ENCODE measurements at regions of chr3 and their contacts with region 1.

Region 1: GRCh38 chr3:89923921-89924610 is 816.6 kb downstream of the EPHA3 start:
- DNase-seq: no peak
- ATAC-seq: no peak
- H3K4me3 ChIP-seq: no peak overlapping the region
- H3K4me1 ChIP-seq: no peaks in the 10 kb centered on the region
- CTCF ChIP-seq: no peak

Region 2: DNA sequence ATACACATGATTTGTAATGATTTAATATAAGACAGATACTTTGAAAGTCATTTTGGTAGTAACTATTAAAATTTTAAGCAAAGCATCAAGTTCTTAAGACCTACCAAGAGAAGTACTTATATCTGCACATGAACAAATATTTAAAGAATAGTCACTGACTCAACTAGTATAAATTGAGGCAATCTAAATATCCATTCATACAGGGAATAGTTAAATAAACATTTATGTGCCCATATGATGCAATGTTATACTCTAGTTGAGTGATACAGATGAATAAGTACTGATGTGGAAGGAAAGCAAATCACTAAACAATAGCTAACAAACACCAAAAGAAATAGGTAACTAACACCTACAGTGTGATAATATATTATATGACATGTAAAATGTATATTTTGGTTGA is 288.9 kb before region 1 on chr3:
- intact Hi-C with region 1: no loop called
- DNase-seq: no peak
- ATAC-seq: no peak
- H3K4me3 ChIP-seq: no peak overlapping the region
- H3K4me1 ChIP-seq: no peaks in the 10 kb centered on the region
- CTCF ChIP-seq: no peak

Region 3: DNA sequence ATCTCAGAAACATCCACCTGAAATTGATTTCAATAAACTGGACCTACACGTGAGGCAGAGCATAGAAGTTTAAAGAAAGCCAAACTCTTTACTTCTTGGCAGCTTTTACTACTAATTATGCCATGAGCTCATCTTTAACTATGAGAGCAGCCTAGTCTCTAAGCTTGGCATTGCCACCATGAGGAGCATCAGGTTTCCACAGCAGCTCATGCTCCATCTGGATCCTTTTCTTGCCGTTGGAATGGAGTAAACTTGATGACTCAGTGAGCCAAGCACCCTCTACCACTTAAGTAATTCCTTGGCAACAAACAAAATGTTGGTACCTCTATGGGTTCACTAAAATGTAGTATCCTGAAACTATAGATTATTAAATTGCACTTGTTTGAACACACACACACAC is 233.4 kb before region 1 on chr3:
- intact Hi-C with region 1: loop called in 1 of 2 experiments (anchors 10 kb)
- DNase-seq: no peak
- ATAC-seq: no peak
- H3K4me3 ChIP-seq: no peak overlapping the region
- H3K4me1 ChIP-seq: no peaks in the 10 kb centered on the region
- CTCF ChIP-seq: no peak